Esophagus muscularis mucosa (tissue), 4 donors: ENCODE measurements at regions of chr17 and their contacts with region 1.

Region 1: DNA sequence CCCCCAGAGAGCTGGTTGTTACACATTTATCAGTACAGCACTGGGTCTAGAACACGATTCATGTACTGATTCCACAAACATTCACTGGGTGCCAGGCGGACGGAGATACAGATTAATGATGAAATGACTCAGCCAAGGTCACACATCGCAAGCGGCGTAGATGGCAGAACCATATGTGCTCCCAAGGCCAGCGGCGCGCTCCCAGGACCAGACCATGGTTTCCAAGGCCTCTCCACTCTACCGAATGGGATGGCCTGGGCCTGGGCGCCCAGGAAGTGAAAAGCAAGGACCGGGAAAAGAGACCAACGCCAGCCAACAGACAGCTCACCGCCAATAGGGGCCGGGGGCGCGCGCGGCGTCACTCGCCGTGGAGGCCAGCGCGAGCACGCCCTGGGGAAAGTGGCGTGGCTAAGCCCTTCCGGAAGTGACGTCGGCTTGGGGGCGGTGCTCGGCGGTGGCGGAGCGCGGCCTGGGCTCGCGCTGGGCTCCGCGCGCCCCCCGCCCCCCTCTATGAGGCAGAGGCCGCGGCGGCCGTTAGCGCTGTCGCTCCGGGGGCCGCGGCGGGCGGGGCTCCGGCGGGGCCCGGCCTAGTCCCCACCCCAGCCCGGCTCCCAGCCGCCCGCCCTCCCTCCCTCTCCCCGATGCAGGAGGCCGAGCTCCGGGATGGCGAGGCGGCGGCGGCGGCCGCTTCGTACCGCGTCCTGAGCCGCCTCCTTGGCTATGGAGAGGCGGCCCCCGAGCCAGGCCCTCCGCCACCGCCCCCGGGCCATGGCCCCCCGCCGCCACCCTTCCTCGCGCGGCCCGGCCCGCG is at the start of gene SOCS7:
- DNase-seq: peak; percentile 97
- H3K4me3 ChIP-seq: peak within 1 kb of the TSS; percentile 84 to 99 (median 98)
- H3K27ac ChIP-seq: peak within 1 kb of the TSS; percentile 91 to 95 (median 94)
- H3K4me1 ChIP-seq: peaks cover 28 to 48% (median 44%) of the 10 kb centered on the region in 4 donors
- H3K27me3 ChIP-seq: no peaks in the 10 kb centered on the region
- CTCF ChIP-seq: no peak
- EP300 ChIP-seq: peak; percentile 34
- POLR2A ChIP-seq: no peak
- total RNA-seq, gene SOCS7: 11.2 to 18.9 (median 13.5) TPM

Region 2: GRCh38 chr17:37792787-37793186 is 558.8 kb before region 1 on chr17:
- intact Hi-C with region 1: no loop called
- DNase-seq: no peak
- H3K4me3 ChIP-seq: no peak overlapping the region
- H3K27ac ChIP-seq: no peak overlapping the region
- H3K4me1 ChIP-seq: no peaks in the 10 kb centered on the region
- H3K27me3 ChIP-seq: peaks cover 0 to 70% (median 5%) of the 10 kb centered on the region in 4 donors
- CTCF ChIP-seq: no peak
- EP300 ChIP-seq: no peak
- POLR2A ChIP-seq: no peak

Region 3: GRCh38 chr17:38379438-38379837 is 27.8 kb after region 1 on chr17:
- intact Hi-C with region 1: no loop called
- DNase-seq: no peak
- H3K4me3 ChIP-seq: no peak overlapping the region
- H3K27ac ChIP-seq: no peak overlapping the region
- H3K4me1 ChIP-seq: no peaks in the 10 kb centered on the region
- H3K27me3 ChIP-seq: no peaks in the 10 kb centered on the region
- CTCF ChIP-seq: no peak
- EP300 ChIP-seq: no peak
- POLR2A ChIP-seq: no peak

Region 4: GRCh38 chr17:38403491-38403890 is 51.9 kb after region 1 on chr17:
- intact Hi-C with region 1: loop called (anchors 5 kb)
- DNase-seq: no peak
- H3K4me3 ChIP-seq: no peak overlapping the region
- H3K27ac ChIP-seq: no peak overlapping the region
- H3K4me1 ChIP-seq: no peaks in the 10 kb centered on the region
- H3K27me3 ChIP-seq: no peaks in the 10 kb centered on the region
- CTCF ChIP-seq: no peak
- EP300 ChIP-seq: no peak
- POLR2A ChIP-seq: no peak

Region 5: DNA sequence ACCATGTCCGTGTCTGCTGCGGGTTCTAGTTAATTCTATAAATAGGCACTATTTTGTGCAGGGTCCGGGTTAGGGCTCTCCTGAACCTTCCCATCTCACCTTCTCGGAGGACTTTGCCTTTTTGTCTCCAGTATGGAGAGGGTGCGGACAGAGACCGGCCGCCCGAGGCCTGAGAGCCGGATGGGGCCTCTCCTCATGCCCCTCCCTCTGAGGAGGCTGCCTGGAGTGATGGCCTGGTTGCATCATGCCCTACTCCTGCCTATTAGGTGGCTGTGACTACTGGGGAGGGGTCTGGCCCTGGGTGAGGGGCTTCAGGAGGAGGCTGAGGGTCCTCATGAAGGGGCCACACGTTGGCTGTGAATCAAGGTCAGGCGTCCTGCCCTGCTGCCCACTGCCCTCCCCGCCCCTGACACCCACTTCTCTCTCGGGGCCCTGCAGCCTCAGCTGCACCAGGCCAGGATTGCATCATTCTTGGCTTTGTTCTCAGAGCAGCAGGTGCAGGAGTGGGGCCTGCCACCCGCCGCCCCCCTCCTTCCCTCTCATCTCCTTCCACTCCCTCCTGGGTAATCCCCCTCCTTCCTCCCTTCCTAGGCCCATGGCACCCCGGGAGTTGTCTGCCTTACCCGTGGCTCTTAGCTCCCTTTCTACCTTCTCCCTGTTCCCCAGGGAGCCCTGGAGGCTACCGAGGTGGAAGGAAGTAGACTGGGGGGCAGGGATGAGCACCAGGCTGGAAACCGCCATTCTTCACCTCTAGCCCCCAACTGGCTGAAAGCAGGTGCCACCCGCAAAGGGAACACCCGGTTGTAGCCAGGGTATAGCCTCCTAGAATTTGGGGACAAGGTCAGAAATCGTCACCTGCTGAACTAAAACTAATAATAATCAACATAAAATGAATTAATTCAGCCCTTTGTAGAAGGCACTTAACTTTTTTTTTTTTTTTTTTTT is 63.9 kb after region 1 on chr17:
- intact Hi-C with region 1: loop called (anchors 1 kb)
- DNase-seq: no peak
- H3K4me3 ChIP-seq: peak overlapping the region in 2 of 4 donors; percentile 7 to 23
- H3K27ac ChIP-seq: peak overlapping the region in 1 of 4 donors; percentile 19
- H3K4me1 ChIP-seq: peaks cover 29 to 39% (median 36%) of the 10 kb centered on the region in 4 donors
- H3K27me3 ChIP-seq: peaks cover 0 to 29% (median 0%) of the 10 kb centered on the region in 4 donors
- CTCF ChIP-seq: no peak
- EP300 ChIP-seq: no peak
- POLR2A ChIP-seq: no peak

Region 6: GRCh38 chr17:38454516-38454915 is 102.9 kb after region 1 on chr17:
- intact Hi-C with region 1: no loop called
- DNase-seq: no peak
- H3K4me3 ChIP-seq: peak overlapping the region; percentile 50 to 69 (median 54)
- H3K27ac ChIP-seq: peak overlapping the region; percentile 82 to 92 (median 86)
- H3K4me1 ChIP-seq: peaks cover 74 to 83% (median 77%) of the 10 kb centered on the region in 4 donors
- H3K27me3 ChIP-seq: no peaks in the 10 kb centered on the region
- CTCF ChIP-seq: no peak
- EP300 ChIP-seq: no peak
- POLR2A ChIP-seq: no peak

Region 7: DNA sequence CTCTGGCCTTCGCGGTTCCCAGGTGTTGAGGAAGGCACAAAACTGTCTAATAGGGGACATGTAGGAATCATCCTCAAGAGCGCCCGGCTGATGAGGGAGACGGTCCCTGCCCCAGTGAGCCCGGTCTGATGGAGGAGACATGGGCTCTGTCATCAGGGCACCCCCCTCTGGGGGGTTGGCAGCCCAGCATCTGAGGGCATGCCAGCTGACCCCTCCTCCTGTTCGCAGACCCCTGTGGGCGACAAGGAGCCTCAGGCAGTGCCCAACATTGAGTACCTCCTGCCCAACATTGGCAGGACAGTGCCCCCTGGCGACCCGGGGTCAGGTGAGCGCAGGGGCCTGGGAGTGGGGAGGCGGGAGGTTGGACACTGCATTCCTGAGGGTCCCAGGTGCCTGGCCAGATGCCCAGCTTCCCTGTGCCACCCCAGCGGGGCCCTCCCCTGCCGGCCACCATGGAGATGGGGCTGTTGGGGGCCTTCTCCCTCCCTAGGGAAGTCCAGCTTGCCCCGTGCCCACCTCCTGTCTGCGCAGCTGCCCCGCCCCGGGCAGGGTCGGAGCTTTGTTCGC is 146.7 kb after region 1 on chr17:
- intact Hi-C with region 1: loop called (anchors 10 kb)
- DNase-seq: no peak
- H3K4me3 ChIP-seq: no peak overlapping the region
- H3K27ac ChIP-seq: no peak overlapping the region
- H3K4me1 ChIP-seq: no peaks in the 10 kb centered on the region
- H3K27me3 ChIP-seq: no peaks in the 10 kb centered on the region
- CTCF ChIP-seq: no peak
- EP300 ChIP-seq: no peak
- POLR2A ChIP-seq: no peak